ENCODE measurements at regions of chr4 and their contacts with region 1.

Region 1: DNA sequence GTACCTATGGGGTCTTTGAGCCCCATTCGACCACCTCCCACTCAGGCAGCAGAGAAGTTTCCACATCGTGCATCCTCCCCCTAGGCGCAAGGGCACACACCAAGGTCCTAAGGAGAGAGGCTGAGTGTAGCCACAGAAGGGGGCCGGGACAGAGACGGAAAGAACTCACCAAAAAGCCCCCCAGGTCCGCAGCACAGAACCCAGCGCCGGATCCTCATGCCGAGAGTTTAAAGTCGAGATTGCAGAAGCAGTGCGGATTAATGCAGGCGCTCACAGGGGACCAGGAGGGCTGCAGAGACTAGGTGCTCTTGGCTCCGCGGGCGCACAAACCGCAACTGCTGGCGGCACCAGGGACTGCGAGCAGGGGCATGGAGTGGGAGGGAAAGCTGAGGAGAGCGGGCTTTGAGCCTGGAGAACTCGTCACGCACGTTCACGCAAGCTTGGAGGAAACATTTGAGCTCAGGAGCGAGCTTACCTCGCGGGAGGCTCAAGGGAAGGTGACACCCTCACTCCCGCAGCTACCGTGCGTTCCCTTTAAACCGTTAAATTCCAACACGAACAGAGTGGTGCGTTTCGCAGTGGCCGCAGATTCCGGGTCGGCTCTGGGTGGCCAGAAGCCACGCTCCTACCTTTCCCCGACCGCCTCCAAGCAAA is 8.5 kb downstream of the NKX3-2 start:
- DNase-seq: peak in 1 of 2 donors; percentile 70
- H3K4me3 ChIP-seq: no peak overlapping the region
- H3K27ac ChIP-seq: no peak overlapping the region
- H3K4me1 ChIP-seq: peaks cover 12% of the 10 kb centered on the region
- H3K27me3 ChIP-seq: peaks cover 22% of the 10 kb centered on the region
- CTCF ChIP-seq: no peak
- POLR2A ChIP-seq: no peak

Region 2: GRCh38 chr4:13484122-13484748 is 51.6 kb before region 1 on chr4 and contains the start of gene RAB28:
- intact Hi-C with region 1: no loop called
- DNase-seq: peak; percentile 93 to 96
- H3K4me3 ChIP-seq: peak within 1 kb of the TSS; percentile 90 to 91
- H3K27ac ChIP-seq: peak within 1 kb of the TSS; percentile 93
- H3K4me1 ChIP-seq: peaks cover 17% of the 10 kb centered on the region
- H3K27me3 ChIP-seq: no peaks in the 10 kb centered on the region
- CTCF ChIP-seq: no peak
- POLR2A ChIP-seq: peak in 1 of 2 donors; percentile 73
- total RNA-seq, gene RAB28: 182 TPM

Region 3: DNA sequence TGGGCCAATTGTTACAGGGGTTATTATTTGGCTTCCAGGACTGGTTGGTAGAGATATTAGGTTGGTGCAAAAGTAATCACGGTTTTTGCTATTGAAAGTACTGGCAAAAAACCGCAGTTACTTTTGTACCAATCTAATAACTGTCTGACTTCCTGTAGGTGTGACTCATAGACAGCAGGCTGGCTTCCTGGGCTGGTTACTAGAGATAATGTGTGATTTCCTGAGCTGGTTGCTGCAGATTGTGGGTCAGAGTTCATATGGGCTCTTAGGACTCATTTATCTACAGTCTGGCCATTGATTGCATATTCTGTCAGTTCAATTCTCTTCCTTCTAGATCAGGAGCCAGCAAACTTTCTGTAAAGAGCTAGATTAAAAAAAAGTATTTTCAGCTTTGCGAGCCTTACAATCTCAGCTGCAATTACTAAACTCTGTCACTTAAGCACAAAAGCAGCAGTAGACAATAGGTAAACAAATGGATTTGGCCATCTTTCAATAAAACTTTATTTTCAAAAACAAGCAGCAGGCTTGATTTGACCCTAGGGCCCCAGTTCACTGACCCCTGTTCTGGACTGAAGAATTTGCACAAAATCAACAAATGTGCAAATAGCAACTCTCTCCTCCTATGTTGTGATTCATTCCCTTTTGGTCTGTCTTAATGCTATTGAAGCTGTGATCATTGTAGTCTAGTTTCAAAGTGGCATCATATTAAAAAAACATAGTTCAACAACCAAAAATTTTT is 142.5 kb after region 1 on chr4:
- intact Hi-C with region 1: no loop called
- DNase-seq: no peak
- H3K4me3 ChIP-seq: no peak overlapping the region
- H3K27ac ChIP-seq: no peak overlapping the region
- H3K4me1 ChIP-seq: no peaks in the 10 kb centered on the region
- H3K27me3 ChIP-seq: no peaks in the 10 kb centered on the region
- CTCF ChIP-seq: no peak
- POLR2A ChIP-seq: no peak

Region 4: DNA sequence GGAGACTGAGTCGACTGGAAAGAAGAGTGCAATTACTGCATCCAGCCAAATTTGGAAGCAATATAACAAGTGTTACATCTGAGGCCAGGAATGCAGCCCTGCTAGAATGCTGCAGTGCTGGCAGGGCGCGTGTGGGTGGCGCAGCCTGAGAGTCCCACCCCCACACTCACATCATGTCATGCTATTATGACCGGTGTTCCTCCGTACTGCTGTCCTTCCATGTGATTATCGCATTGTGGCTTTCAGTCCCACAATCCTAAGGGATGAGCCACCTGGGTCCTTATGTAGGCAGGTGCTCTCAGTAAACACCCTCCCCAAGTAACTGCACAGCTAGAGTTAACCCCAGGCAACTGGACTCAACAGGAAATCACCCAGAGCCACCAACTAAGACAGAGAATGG is 1343.8 kb after region 1 on chr4:
- intact Hi-C with region 1: loop called (anchors 5 kb)
- DNase-seq: no peak
- H3K4me3 ChIP-seq: no peak overlapping the region
- H3K27ac ChIP-seq: no peak overlapping the region
- H3K4me1 ChIP-seq: peaks cover 13% of the 10 kb centered on the region
- H3K27me3 ChIP-seq: no peaks in the 10 kb centered on the region
- CTCF ChIP-seq: no peak
- POLR2A ChIP-seq: no peak

Measured in vagina (tissue), 2 donors.